Gastrocnemius medialis (tissue), 4 donors: ENCODE measurements at regions of chr4 and their contacts with region 1.

Region 1: DNA sequence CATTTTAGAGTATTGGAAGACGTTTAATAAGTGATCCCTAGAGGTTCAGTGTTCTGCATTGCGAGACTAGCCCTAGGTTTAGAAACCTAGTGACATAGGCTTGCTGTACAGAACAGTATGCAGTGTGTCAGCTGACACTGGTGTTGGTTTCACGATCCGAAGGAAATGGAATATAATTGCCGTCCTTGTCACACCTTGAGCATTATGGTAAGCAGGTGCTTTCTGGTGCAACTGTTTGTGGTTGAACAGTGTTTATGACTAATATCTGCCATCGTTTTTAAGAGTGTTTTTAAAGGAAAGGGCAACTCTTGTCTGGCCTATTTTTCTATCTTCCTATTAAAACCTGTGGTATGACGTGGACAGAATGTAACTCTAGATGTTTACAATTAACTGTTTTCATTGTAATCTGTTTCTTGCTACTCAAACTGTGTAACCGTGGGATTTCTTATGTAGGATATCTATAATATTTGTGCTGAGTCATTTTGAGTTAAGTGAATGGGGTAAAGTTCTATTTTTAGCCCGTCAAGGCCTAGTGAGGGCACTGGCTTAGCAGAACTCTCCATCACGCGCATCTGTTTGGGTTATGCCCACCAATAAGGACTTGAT is 53.8 kb upstream of the TBC1D14 start:
- DNase-seq: peak; percentile 76 to 79
- ATAC-seq: peak; percentile 94 to 97
- H3K4me3 ChIP-seq: peak overlapping the region; percentile 30 to 47 (median 32)
- H3K27ac ChIP-seq: peak overlapping the region; percentile 87 to 93 (median 90)
- H3K4me1 ChIP-seq: peaks cover 45 to 48% of the 10 kb centered on the region in 2 donors
- H3K27me3 ChIP-seq: no peaks in the 10 kb centered on the region
- CTCF ChIP-seq: peak in 1 of 5 experiments; percentile 20
- POLR2A ChIP-seq: peak in 1 of 2 donors; percentile 66

Region 2: GRCh38 chr4:6783053-6783981 is 72.5 kb before region 1 on chr4:
- in situ Hi-C with region 1: loop called in 1 of 4 experiments (anchors 10 kb)
- intact Hi-C with region 1: loop called (anchors 5 kb)
- DNase-seq: peak; percentile 88 to 93
- ATAC-seq: peak; percentile 67 to 72
- H3K4me3 ChIP-seq: peak overlapping the region; percentile 74 to 98 (median 82)
- H3K27ac ChIP-seq: peak overlapping the region; percentile 95 to 100 (median 98)
- H3K4me1 ChIP-seq: peaks cover 58 to 59% of the 10 kb centered on the region in 2 donors
- H3K27me3 ChIP-seq: no peaks in the 10 kb centered on the region
- CTCF ChIP-seq: peak in 4 of 5 experiments; percentile 4 to 42 (median 19)
- POLR2A ChIP-seq: peak; percentile 94 to 95

Region 3: GRCh38 chr4:6834867-6835266 is 20.9 kb before region 1 on chr4:
- in situ Hi-C with region 1: no loop called
- intact Hi-C with region 1: loop called (anchors 2 kb)
- DNase-seq: peak; percentile 88 to 89
- ATAC-seq: peak; percentile 99
- H3K4me3 ChIP-seq: no peak overlapping the region
- H3K27ac ChIP-seq: peak overlapping the region; percentile 76 to 89 (median 84)
- H3K4me1 ChIP-seq: peaks cover 20 to 32% of the 10 kb centered on the region in 2 donors
- H3K27me3 ChIP-seq: no peaks in the 10 kb centered on the region
- CTCF ChIP-seq: no peak
- POLR2A ChIP-seq: no peak

Region 4: GRCh38 chr4:6885951-6886557 is 30.3 kb after region 1 on chr4:
- in situ Hi-C with region 1: no loop called
- intact Hi-C with region 1: loop called (anchors 1 kb)
- DNase-seq: peak; percentile 73 to 81
- ATAC-seq: peak; percentile 86 to 87
- H3K4me3 ChIP-seq: peak overlapping the region; percentile 8 to 40 (median 20)
- H3K27ac ChIP-seq: peak overlapping the region; percentile 84 to 94 (median 90)
- H3K4me1 ChIP-seq: peaks cover 18 to 19% of the 10 kb centered on the region in 2 donors
- H3K27me3 ChIP-seq: no peaks in the 10 kb centered on the region
- CTCF ChIP-seq: peak; percentile 9 to 56 (median 44)
- POLR2A ChIP-seq: peak in 1 of 2 donors; percentile 31